GM12878 (cell line): ENCODE measurements at regions of chr10 and their contacts with region 1.

Region 1: DNA sequence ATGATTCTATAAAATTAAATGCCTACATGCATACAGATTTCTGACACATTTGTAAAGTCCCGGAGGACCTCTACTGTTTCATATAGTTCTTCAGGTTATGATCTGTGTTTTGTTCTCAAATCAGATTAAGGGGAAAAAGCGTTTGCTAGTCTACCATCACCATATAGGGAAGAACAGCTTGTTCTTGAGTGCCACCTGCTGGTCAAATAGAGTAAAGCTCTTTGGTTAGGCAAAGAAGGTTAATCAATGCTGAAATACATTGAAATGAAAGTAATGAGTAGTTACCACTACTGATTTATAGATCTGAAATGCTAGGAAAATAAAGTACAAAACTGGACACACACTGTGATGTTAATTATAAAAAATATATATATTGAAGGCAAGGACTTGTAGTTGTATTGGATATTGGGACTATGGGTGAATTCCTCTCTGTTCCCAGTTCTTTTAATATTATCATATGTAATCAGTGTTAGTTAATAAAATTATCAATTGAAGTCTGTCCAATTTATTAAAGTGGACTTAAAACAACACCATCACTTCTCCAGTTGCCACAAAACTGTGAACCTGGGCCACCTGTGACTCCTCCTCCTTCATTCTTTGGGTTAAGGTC is 72.6 kb upstream of the PDLIM1 start:
- DNase-seq: peak; percentile 50
- ATAC-seq: peak; percentile 90
- H3K4me3 ChIP-seq: no peak overlapping the region
- H3K27ac ChIP-seq: no peak overlapping the region
- H3K4me1 ChIP-seq: peaks cover 10% of the 10 kb centered on the region; the same call in 1 of the 2 replicates
- H3K27me3 ChIP-seq: no peaks in the 10 kb centered on the region
- CTCF ChIP-seq: peak; percentile 75 to 87 (median 83)
- EP300 ChIP-seq: no peak
- POLR2A ChIP-seq: no peak
- RAD21 ChIP-seq: peak; percentile 100

Region 2: GRCh38 chr10:94630017-94630688 is 733.3 kb before region 1 on chr10:
- CTCF ChIA-PET with region 1: interaction called, 3 read pairs
- POLR2A ChIA-PET with region 1: no interaction called
- RAD21 ChIA-PET with region 1: interaction called, 3 read pairs
- SMC1A ChIA-PET with region 1: no interaction called
- in situ Hi-C with region 1: loop called (anchors 10 kb)
- intact Hi-C with region 1: no loop called
- DNase-seq: no peak
- ATAC-seq: peak; percentile 70
- H3K4me3 ChIP-seq: no peak overlapping the region
- H3K27ac ChIP-seq: no peak overlapping the region
- H3K4me1 ChIP-seq: no peaks in the 10 kb centered on the region
- H3K27me3 ChIP-seq: no peaks in the 10 kb centered on the region
- CTCF ChIP-seq: peak; percentile 27 to 61 (median 45); a peak in 4 of 6 replicates
- EP300 ChIP-seq: no peak
- POLR2A ChIP-seq: no peak
- RAD21 ChIP-seq: peak; percentile 64

Region 3: GRCh38 chr10:95201736-95202135 is 161.7 kb before region 1 on chr10:
- CTCF ChIA-PET with region 1: interaction called, 9 read pairs
- POLR2A ChIA-PET with region 1: interaction called, 3 read pairs
- RAD21 ChIA-PET with region 1: interaction called, 13 read pairs
- SMC1A ChIA-PET with region 1: interaction called, 12 read pairs
- in situ Hi-C with region 1: no loop called
- intact Hi-C with region 1: no loop called
- DNase-seq: no peak
- ATAC-seq: peak; percentile 65
- H3K4me3 ChIP-seq: no peak overlapping the region
- H3K27ac ChIP-seq: no peak overlapping the region
- H3K4me1 ChIP-seq: no peaks in the 10 kb centered on the region
- H3K27me3 ChIP-seq: no peaks in the 10 kb centered on the region
- CTCF ChIP-seq: peak; percentile 18 to 40 (median 32); a peak in 3 of 6 replicates
- EP300 ChIP-seq: no peak
- POLR2A ChIP-seq: no peak
- RAD21 ChIP-seq: peak; percentile 47

Region 4: GRCh38 chr10:95246579-95247051 is 116.8 kb before region 1 on chr10:
- CTCF ChIA-PET with region 1: interaction called, 346 read pairs
- POLR2A ChIA-PET with region 1: no interaction called
- RAD21 ChIA-PET with region 1: interaction called, 185 read pairs
- SMC1A ChIA-PET with region 1: interaction called, 262 read pairs
- in situ Hi-C with region 1: loop called (anchors 5 kb)
- intact Hi-C with region 1: loop called (anchors 1 kb)
- DNase-seq: no peak
- ATAC-seq: peak; percentile 81
- H3K4me3 ChIP-seq: no peak overlapping the region
- H3K27ac ChIP-seq: peak overlapping the region; percentile 78
- H3K4me1 ChIP-seq: peaks cover 47% of the 10 kb centered on the region
- H3K27me3 ChIP-seq: no peaks in the 10 kb centered on the region
- CTCF ChIP-seq: peak; percentile 77 to 85 (median 78)
- EP300 ChIP-seq: no peak
- POLR2A ChIP-seq: no peak
- RAD21 ChIP-seq: peak; percentile 77

Region 5: GRCh38 chr10:95279042-95279820 is 84.2 kb before region 1 on chr10:
- CTCF ChIA-PET with region 1: interaction called, 348 read pairs
- POLR2A ChIA-PET with region 1: interaction called, 3 read pairs
- RAD21 ChIA-PET with region 1: interaction called, 139 read pairs
- SMC1A ChIA-PET with region 1: interaction called, 313 read pairs
- in situ Hi-C with region 1: no loop called
- intact Hi-C with region 1: no loop called
- DNase-seq: no peak
- ATAC-seq: peak; percentile 59
- H3K4me3 ChIP-seq: peak overlapping the region; percentile 29; the same call in 1 of the 2 replicates
- H3K27ac ChIP-seq: peak overlapping the region; percentile 6; the same call in 1 of the 2 replicates
- H3K4me1 ChIP-seq: peaks cover 30% of the 10 kb centered on the region
- H3K27me3 ChIP-seq: no peaks in the 10 kb centered on the region
- CTCF ChIP-seq: no peak
- EP300 ChIP-seq: no peak
- POLR2A ChIP-seq: no peak
- RAD21 ChIP-seq: no peak

Region 6: GRCh38 chr10:95297402-95297801 is 66.0 kb before region 1 on chr10:
- CTCF ChIA-PET with region 1: interaction called, 22 read pairs
- POLR2A ChIA-PET with region 1: interaction called, 3 read pairs
- RAD21 ChIA-PET with region 1: interaction called, 23 read pairs
- SMC1A ChIA-PET with region 1: interaction called, 80 read pairs
- in situ Hi-C with region 1: no loop called
- intact Hi-C with region 1: no loop called
- DNase-seq: no peak
- ATAC-seq: peak; percentile 44
- H3K4me3 ChIP-seq: no peak overlapping the region
- H3K27ac ChIP-seq: peak overlapping the region; percentile 87
- H3K4me1 ChIP-seq: peaks cover 52% of the 10 kb centered on the region
- H3K27me3 ChIP-seq: no peaks in the 10 kb centered on the region
- CTCF ChIP-seq: no peak
- EP300 ChIP-seq: no peak
- POLR2A ChIP-seq: peak; percentile 54; the same call in 1 of the 2 replicates
- RAD21 ChIP-seq: no peak

Region 7: DNA sequence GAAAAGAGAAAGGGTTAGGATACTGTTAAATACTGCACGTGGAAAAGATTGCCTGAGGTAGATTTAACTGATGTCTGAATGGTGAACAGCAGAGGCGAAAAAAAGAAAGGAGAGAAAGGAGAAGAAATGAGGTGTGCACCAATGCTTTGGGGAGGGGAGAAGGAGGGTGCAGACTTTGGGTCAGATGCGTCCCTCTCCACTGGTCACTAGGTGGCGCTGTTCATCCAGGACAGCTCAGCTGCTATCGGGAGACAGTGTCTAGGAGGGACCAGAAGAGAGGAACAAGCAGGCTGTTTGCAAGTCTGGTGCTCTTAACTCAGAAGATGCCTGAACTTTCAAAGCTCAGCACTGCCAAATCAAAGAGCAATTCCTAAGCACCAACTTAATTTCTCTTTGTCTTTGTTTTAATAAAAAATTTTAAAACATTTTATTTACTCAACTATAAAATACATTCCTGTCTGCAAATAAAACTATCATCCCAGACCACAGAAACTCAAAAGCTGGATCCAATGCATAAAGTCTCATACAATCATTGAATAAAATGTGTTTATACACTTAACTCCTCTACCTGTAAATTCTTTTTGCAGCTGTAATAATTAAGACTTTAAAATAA is 11.3 kb after region 1 on chr10:
- CTCF ChIA-PET with region 1: interaction called, 126 read pairs
- POLR2A ChIA-PET with region 1: no interaction called
- RAD21 ChIA-PET with region 1: interaction called, 24 read pairs
- SMC1A ChIA-PET with region 1: interaction called, 85 read pairs
- in situ Hi-C with region 1: no loop called
- intact Hi-C with region 1: no loop called
- DNase-seq: no peak
- ATAC-seq: peak; percentile 99
- H3K4me3 ChIP-seq: no peak overlapping the region
- H3K27ac ChIP-seq: no peak overlapping the region
- H3K4me1 ChIP-seq: peaks cover 16% of the 10 kb centered on the region
- H3K27me3 ChIP-seq: peaks cover 0 to 3% of the 10 kb centered on the region in 2 experiments; a peak in 1 of 4 replicates
- CTCF ChIP-seq: peak; percentile 94 to 96 (median 96)
- EP300 ChIP-seq: no peak
- POLR2A ChIP-seq: no peak
- RAD21 ChIP-seq: peak; percentile 97